Posterior vena cava (tissue), 2 donors: ENCODE measurements at regions of chr14 and their contacts with region 1.

Region 1: DNA sequence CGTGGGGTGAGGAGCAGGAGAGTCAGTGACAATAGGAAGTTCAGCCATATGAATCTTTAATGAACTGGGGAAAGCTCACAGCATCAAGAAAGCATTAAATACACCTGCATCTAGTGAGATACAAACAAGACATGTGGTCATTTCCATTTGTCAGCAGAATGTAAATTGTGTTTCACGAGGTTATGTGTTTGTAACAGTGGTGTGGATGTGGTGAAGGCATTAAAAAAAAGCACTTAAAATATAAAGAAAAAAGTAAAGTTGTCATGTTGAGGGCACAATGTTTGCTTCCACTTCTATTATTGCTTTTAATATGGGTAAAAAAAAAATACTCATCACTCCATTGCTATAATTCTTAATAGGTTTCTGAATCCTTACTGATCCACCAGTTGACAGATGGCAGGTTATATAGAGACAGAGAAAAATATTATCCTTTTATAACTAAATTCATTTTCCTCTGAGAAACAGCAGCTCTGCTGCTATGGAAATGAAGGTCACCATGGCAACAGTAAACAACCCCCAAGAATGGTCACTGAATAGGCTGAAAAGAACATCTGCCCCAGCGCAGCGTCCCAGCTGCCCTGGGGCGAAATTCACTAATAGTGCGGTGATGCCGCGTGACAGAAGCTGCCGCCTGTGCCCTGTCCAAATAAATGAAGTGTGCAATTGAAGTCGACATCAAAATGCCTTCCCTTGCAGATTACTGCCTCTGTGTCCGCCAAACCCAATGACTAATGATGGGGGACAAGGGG is 226.1 kb downstream of the FOXN3 start:
- DNase-seq: no peak

Region 2: DNA sequence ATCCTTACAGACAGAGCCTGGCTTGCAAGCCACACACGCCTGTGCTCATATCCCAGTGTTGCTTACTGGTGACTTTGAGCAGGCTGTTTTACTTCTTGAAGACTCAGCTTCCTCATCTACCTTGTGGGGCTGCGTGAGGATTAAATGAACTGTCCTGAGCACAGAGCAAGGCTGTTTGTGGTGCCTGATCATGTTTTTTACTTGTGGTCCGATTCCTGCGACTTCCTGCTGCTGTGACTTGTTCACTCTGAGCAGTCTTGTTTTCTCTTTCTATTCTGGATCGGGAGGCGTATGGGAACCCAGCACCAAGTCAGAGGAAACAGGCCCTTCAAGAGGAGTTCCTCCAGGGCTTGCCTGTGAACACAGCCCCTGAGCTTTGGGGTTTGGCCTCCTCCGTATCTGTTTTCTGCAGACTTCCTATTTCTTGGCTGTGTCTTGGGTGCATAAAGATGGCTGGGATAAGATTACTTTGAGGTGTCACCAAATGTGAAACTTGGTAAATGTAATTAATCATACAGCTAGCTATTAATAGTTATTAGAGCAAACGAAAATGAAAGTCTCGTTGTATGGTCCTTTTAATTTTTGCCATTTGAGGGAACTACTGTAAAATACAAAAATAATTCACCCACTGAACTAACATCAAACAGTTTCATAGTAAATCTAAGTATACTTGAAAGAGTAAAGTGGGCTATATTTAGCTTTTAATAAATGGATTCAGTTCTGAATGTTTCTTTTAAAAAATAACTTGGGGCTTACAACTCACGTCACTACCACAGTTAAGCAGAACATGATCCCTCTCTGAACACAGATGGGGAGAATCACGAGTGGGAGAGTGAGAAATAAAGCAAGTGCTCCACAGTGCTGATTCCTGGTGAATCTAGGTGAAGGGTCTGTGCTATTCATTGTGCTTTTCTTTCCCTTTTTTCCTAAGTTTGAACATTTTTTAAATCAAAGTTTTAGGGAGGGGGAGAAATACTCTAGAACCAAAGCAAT is 25.5 kb before region 1 on chr14:
- intact Hi-C with region 1: loop called in 1 of 2 experiments (anchors 1 kb)
- DNase-seq: no peak

Region 3: DNA sequence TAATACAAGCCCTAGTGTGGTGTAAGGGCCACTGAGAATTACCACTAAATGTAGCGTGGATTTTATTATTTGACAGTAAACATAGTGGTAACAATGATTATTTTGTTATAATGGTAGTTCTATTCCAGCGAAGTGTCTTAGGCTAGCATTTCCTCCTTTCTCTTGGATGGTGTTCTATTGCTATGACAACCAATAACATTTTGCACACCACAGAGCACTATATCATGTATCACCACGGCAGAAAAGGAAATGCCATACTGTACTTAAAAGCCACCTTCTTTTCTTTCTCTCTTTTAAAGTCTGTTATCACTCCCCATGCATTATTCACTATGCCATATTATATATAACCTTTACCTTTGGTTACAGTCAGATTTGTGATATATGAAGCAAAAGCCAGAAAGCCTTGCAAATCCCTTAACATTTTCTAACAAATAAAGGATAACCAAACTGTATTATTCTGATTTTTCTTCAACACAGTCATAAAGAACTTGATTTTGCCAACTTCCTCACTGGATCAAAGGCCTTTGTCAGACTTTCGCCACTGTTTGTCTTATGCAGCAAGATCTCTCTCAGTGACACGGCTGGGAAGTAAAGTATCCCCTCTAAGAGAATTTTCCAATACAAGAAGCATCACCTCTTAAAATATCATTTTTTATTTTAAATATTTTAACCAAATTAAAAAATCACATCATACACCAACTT is 30.3 kb after region 1 on chr14:
- intact Hi-C with region 1: no loop called
- DNase-seq: no peak